ENCODE measurements at regions of chr1 and their contacts with region 1.

Region 1: GRCh38 chr1:56508523-56508983 is 70.8 kb downstream of the PLPP3 start:
- DNase-seq: no peak
- H3K4me3 ChIP-seq: no peak overlapping the region
- H3K27ac ChIP-seq: peak overlapping the region; percentile 28
- H3K4me1 ChIP-seq: peaks cover 83% of the 10 kb centered on the region
- H3K27me3 ChIP-seq: no peaks in the 10 kb centered on the region
- CTCF ChIP-seq: no peak
- POLR2A ChIP-seq: no peak

Region 2: DNA sequence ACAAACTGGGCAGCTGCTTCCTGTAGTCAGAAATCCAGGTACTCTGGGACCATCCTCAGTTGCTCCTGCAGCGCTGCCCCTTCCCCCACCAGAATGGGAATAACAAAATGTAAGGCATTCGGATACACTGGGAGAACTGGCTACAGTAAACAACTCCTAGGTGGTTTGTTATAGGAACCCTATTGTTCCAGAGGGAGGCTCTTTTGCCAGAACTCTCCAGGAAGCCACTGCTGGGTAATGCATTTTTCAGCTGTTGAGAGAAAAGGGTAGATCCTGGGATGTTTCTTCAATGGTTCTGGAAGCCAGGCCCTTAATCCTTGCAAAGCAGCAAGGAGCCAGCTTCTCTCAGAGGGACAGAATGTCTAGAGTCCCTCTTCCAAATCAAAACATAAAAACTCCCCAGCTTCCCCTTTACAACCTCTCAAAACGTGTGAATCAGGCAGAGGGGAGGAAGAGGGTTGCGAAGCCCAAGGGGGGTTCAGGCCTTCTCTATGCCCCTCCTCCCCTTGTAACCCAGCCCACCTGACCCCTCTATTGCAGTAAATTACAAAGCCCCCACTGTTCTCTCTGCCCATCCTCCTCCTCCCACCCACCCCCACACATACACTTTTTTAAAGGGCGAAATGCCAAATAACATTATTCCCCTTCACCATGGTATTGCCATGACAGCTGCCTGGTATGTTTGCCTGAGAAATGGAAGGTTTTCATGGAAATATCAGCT is 41.7 kb after region 1 on chr1:
- intact Hi-C with region 1: loop called (anchors 10 kb)
- DNase-seq: no peak
- H3K4me3 ChIP-seq: no peak overlapping the region
- H3K27ac ChIP-seq: no peak overlapping the region
- H3K4me1 ChIP-seq: peaks cover 97% of the 10 kb centered on the region
- H3K27me3 ChIP-seq: no peaks in the 10 kb centered on the region
- CTCF ChIP-seq: no peak
- POLR2A ChIP-seq: no peak

Measured in vagina (tissue), 2 donors.